ENCODE measurements at regions of chr3 and their contacts with region 1.

Region 1: DNA sequence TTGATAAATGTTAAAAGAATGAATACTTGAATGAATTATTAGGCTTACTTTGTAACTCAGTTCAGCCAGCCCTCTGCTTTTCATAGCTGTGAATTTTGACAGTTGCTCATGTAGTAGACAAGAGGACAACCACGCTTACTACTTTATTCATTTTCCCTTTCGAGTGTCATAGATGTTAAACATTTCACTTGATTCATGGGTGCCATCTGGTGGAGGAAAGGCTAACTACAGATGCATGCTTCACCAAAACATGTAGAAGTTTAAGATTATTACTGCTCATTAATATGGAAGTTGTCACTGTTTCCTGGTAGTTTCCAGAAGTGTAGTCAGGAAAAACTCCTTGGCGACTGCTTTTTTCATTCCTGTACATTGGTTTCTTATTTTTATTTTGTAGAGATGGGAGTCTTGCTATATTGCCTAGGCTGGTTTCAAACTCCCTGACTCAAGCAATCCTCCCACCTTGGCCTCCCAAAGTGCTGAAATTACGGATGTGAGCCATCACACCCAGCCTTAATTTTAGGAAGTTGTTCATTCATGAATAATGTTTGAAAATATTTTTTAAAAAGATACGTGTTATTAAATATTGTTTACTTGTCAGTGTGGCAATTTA is 163.2 kb downstream of the B3GALNT1 start:
- DNase-seq: no peak
- ATAC-seq: peak; percentile 71 to 84
- H3K4me3 ChIP-seq: no peak overlapping the region
- H3K27ac ChIP-seq: no peak overlapping the region
- H3K4me1 ChIP-seq: no peaks in the 10 kb centered on the region
- H3K27me3 ChIP-seq: no peaks in the 10 kb centered on the region
- CTCF ChIP-seq: peak; percentile 87

Region 2: GRCh38 chr3:160707187-160707794 is 234.7 kb before region 1 on chr3:
- intact Hi-C with region 1: loop called (anchors 10 kb)
- DNase-seq: no peak
- ATAC-seq: peak; percentile 50 to 85
- H3K4me3 ChIP-seq: no peak overlapping the region
- H3K27ac ChIP-seq: no peak overlapping the region
- H3K4me1 ChIP-seq: no peaks in the 10 kb centered on the region
- H3K27me3 ChIP-seq: no peaks in the 10 kb centered on the region
- CTCF ChIP-seq: peak; percentile 65